ENCODE measurements at regions of chr11 and their contacts with region 1.

Region 1: GRCh38 chr11:117226388-117227385 is 5.2 kb downstream of the PCSK7 start:
- DNase-seq: peak; percentile 45
- H3K4me3 ChIP-seq: no peak overlapping the region
- CTCF ChIP-seq: peak; percentile 66

Region 2: GRCh38 chr11:116732271-116733042 is 494.2 kb before region 1 on chr11:
- CTCF ChIA-PET with region 1: interaction called, 38 read pairs
- POLR2A ChIA-PET with region 1: no interaction called
- DNase-seq: no peak
- H3K4me3 ChIP-seq: no peak overlapping the region
- CTCF ChIP-seq: peak; percentile 95

Region 3: GRCh38 chr11:116986521-116987105 is 240.1 kb before region 1 on chr11:
- CTCF ChIA-PET with region 1: no interaction called
- POLR2A ChIA-PET with region 1: no interaction called
- DNase-seq: no peak
- H3K4me3 ChIP-seq: no peak overlapping the region
- CTCF ChIP-seq: no peak

Region 4: DNA sequence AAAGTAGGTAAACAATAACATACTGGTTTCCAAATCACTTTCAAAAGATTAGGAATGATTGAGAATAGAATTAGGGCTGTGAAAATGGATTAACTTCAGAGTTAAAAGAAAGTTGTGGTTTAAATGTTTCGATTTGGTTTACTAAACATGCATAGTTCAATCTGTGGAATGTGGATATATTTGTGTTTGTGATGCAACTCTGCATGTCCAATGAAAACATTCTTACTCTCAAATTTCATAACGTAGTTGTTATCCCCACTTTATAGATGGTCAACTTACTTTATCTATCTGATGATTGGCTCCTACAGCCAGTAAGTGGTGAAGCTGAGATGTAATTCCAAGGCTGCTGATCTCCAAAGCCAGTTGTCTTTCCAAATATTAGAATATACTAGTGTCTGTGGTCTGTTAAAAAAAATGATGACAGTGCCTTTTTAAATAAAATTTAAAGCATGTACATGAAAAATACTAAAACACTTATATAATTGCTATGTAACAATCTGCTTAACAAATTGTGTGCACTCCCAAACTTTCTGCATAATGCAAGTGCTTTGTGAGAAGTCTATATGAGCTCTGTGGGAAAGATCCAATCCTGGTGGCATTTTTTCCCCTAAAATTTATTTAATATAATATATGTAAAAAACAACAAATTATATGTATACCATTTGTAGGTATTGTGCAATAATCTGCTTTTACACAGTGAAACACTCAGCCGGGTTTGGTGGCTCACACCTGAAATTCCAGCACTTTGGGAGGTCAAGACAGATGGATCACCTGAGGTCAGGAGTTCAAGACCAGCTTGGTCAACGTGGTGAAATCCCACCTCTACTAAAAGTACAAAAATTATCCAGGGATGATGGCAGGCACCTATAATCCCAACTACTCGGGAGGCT is 118.7 kb before region 1 on chr11:
- CTCF ChIA-PET with region 1: interaction called, 45 read pairs
- POLR2A ChIA-PET with region 1: no interaction called
- DNase-seq: no peak
- H3K4me3 ChIP-seq: no peak overlapping the region
- CTCF ChIP-seq: no peak

Region 5: DNA sequence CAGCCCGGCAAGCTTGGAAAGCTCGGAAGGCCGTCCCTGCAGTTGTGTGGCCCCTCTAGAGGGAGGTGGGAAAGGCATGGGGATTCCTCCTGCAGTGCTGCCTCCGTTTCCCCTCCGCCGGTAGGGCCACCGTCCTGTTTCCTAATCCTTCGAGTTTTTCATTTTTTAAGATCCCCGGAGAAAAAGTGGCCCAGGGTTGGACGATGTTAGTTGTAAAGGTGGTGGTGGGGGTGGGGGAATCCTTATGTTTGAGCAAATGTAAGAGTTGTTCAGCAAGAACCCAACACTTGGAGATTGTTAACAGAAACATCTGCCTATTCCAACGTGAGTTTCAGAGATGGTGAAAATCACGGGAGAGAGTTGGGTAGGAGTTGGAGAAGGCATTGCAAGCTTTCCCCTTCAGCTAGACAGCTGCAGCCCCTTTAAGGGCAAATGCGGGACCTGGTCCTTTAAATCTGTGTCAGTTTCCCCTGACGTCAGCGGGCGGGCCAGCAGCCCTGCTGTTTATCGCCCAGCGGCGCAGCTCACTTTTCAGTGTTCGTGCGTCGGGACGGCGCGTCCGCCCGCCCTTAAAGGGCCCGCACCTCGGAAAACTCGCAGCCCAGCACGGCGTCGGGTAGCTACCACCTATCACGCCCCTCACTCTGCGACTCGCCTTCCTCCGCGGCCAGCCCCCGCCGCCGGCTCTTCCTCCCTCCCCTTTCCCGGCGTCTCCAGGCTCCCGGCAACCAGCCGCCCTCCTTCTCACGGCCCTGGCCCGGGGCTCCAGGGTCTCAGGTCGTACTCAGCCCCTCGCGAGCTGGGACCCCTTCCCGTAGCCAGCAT is 48.3 kb before region 1 on chr11 and contains the start of gene SIDT2:
- CTCF ChIA-PET with region 1: interaction called, 71 read pairs
- POLR2A ChIA-PET with region 1: interaction called, 4 read pairs
- DNase-seq: no peak
- H3K4me3 ChIP-seq: peak within 1 kb of the TSS; percentile 85
- CTCF ChIP-seq: no peak

Region 6: GRCh38 chr11:117205211-117205818 is 21.4 kb before region 1 on chr11:
- CTCF ChIA-PET with region 1: interaction called, 191 read pairs
- POLR2A ChIA-PET with region 1: interaction called, 16 read pairs
- DNase-seq: no peak
- H3K4me3 ChIP-seq: no peak overlapping the region; the same call in 1 of the 2 replicates
- CTCF ChIP-seq: no peak

Measured in AG04449 (cell line).